Sigmoid colon (tissue), 7 donors: ENCODE measurements at regions of chrX and their contacts with region 1.

Region 1: DNA sequence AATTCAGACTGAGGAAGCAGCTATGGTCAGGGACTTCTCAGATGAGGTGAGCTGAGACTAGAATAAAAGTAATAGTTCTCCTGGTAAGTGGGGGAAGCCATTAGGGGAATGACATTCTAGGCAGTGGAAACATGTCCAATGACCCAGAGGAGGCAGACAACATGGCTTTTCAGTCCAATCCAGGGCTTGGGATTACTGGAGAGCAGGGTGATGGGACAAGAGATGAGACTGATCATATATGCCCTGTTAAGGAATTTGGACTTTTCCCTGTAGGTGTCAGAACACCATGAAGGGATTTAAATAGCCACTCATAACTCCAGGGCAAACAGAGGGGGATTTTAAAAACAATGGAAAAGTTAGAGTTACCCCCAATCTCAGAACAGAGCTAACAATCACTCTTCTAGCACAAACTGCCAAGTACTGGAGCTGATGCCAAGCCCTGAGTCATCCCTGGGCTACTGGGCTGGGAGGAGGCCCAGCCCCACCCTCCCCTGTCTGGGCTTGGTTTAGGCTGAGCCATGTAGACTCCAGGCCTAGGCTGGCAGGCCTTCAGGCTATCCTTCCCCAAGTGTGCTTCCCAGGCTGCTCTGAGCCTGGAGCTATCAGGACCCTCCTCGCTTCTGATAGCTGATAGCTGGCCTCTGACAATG is 22.7 kb upstream of the MSN start:
- DNase-seq: peak; percentile 94
- H3K4me3 ChIP-seq: no peak overlapping the region
- H3K27ac ChIP-seq: peak overlapping the region; percentile 51 to 75 (median 71)
- H3K4me1 ChIP-seq: peaks cover 0 to 26% (median 25%) of the 10 kb centered on the region in 4 donors
- H3K27me3 ChIP-seq: no peaks in the 10 kb centered on the region
- CTCF ChIP-seq: no peak
- EP300 ChIP-seq: no peak
- POLR2A ChIP-seq: no peak

Region 2: DNA sequence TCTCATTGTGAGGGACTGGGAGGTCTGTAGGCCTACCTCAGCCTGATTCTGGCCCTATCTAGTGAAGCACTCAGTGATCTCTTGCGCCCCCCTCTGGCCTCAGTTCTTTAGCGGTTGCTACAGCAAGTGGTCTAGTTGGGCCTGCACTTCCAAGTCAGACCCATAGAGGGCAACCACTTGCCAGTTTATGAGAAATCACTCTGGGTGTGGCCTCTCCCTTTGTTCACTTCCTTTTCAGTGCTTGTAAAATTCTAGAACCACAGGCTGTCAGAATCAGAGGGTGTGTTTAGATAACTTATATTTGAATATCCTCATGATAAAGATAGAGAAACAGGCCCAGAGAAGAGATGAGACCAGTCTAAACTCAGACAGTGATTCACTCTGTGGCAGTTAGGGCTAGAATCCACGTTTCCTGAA is 49.3 kb before region 1 on chrX:
- intact Hi-C with region 1: loop called (anchors 5 kb)
- DNase-seq: peak; percentile 97
- H3K4me3 ChIP-seq: no peak overlapping the region
- H3K27ac ChIP-seq: peak overlapping the region; percentile 74 to 78 (median 76)
- H3K4me1 ChIP-seq: peaks cover 0 to 10% (median 4%) of the 10 kb centered on the region in 4 donors
- H3K27me3 ChIP-seq: no peaks in the 10 kb centered on the region
- CTCF ChIP-seq: peak; percentile 89 to 99 (median 97)
- EP300 ChIP-seq: no peak
- POLR2A ChIP-seq: no peak

Region 3: GRCh38 chrX:65697915-65698796 is 53.4 kb after region 1 on chrX:
- intact Hi-C with region 1: no loop called
- DNase-seq: no peak
- H3K4me3 ChIP-seq: no peak overlapping the region
- H3K27ac ChIP-seq: peak overlapping the region; percentile 56 to 70 (median 66)
- H3K4me1 ChIP-seq: peaks cover 0 to 71% (median 53%) of the 10 kb centered on the region in 4 donors
- H3K27me3 ChIP-seq: no peaks in the 10 kb centered on the region
- CTCF ChIP-seq: no peak
- EP300 ChIP-seq: no peak
- POLR2A ChIP-seq: no peak